ENCODE measurements at regions of chr1 and their contacts with region 1.

Region 1: DNA sequence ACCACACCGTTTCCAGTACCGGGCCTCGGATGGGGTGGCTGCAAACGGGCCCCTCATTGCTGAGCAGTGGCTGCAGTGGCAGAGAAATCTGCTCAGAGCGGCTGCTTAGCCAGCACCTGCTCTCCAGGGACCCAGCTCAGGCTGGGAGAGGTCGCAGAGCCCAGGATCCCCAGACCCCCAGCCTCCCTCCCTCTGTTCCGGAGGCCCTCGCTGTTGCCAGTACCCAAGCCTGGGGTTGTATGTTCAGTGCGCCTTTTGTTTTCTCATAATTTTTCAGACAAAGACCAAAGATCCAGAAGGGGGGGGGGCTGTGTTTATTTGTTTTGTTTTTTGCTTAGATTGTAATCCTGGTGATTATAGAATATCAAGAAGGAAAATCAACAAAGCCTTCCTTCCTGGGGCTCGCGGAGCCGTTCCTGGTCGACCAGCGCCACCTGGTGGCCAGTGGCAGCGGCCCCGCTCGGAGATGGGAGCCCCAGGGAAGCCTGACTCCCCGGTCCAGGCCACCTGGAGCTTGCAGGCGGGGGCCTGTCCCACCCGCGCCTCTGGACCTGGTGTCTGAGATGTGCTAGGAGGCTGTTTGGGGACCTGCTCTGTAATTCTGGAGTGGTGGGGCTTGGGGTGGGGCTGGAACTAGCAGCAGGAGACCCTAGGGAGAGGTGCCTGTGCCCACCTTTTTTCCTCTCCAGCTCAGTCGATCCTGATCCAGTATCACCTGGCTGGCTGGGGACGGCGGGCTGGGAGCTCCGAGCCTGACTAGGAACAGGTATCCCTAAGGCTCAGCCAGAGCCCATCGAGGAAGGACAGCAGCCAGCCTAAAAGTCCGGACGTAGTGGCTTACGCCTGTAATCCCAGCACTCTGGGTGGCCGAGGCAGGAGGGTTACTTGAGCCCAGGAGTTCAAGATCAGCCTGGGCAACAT is 123.9 kb upstream of the VAMP3 start:
- DNase-seq: peak; percentile 94
- H3K4me3 ChIP-seq: no peak overlapping the region; a peak in 1 of 4 replicates
- H3K27ac ChIP-seq: peak overlapping the region in 1 of 2 experiments; percentile 85; a peak in 2 of 4 replicates
- H3K4me1 ChIP-seq: peaks cover 0 to 39% of the 10 kb centered on the region in 2 experiments; a peak in 1 of 4 replicates
- H3K27me3 ChIP-seq: no peaks in the 10 kb centered on the region
- CTCF ChIP-seq: peak; percentile 88
- EP300 ChIP-seq: no peak
- RAD21 ChIP-seq: peak; percentile 95

Region 2: GRCh38 chr1:7042322-7043190 is 604.7 kb before region 1 on chr1:
- CTCF ChIA-PET with region 1: interaction called, 33 read pairs
- POLR2A ChIA-PET with region 1: no interaction called
- DNase-seq: peak; percentile 59
- H3K4me3 ChIP-seq: no peak overlapping the region
- H3K27ac ChIP-seq: no peak overlapping the region
- H3K4me1 ChIP-seq: peaks cover 0 to 27% of the 10 kb centered on the region in 2 experiments; a peak in 2 of 4 replicates
- H3K27me3 ChIP-seq: no peaks in the 10 kb centered on the region
- CTCF ChIP-seq: peak; percentile 70
- EP300 ChIP-seq: no peak
- RAD21 ChIP-seq: peak; percentile 71

Region 3: GRCh38 chr1:7207875-7208646 is 439.2 kb before region 1 on chr1:
- CTCF ChIA-PET with region 1: interaction called, 11 read pairs
- POLR2A ChIA-PET with region 1: no interaction called
- DNase-seq: peak; percentile 73
- H3K4me3 ChIP-seq: no peak overlapping the region; a peak in 1 of 4 replicates
- H3K27ac ChIP-seq: no peak overlapping the region
- H3K4me1 ChIP-seq: peaks cover 0 to 8% of the 10 kb centered on the region in 2 experiments; a peak in 2 of 4 replicates
- H3K27me3 ChIP-seq: no peaks in the 10 kb centered on the region
- CTCF ChIP-seq: peak; percentile 55
- EP300 ChIP-seq: no peak
- RAD21 ChIP-seq: peak; percentile 85

Region 4: DNA sequence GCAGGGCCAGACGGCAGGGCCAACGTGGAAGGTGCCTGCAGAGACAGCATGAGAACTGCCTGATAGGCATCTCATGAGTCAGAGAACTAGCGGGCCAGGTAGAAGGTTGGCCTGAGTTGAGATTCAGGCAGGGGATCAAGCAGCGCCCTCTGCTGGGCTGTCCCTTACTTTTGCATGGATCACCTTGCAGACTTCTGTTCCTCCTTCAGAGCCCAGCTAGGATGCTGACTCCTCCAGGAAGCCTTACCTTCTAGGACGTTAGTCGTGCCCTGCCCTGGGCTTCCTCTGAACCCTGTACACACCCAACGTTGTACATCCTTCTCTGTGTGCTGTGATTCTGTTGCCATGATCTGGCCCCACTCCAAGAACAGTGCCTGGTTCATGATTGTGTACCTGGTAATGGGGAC is 107.5 kb before region 1 on chr1:
- CTCF ChIA-PET with region 1: interaction called, 12 read pairs
- POLR2A ChIA-PET with region 1: no interaction called
- DNase-seq: no peak
- H3K4me3 ChIP-seq: no peak overlapping the region; a peak in 1 of 4 replicates
- H3K27ac ChIP-seq: peak overlapping the region in 1 of 2 experiments; percentile 84; a peak in 2 of 4 replicates
- H3K4me1 ChIP-seq: peaks cover 0 to 55% of the 10 kb centered on the region in 2 experiments; a peak in 2 of 4 replicates
- H3K27me3 ChIP-seq: no peaks in the 10 kb centered on the region
- CTCF ChIP-seq: peak; percentile 50
- EP300 ChIP-seq: no peak
- RAD21 ChIP-seq: peak; percentile 49

Region 5: GRCh38 chr1:7580923-7581753 is 66.1 kb before region 1 on chr1:
- CTCF ChIA-PET with region 1: interaction called, 20 read pairs
- POLR2A ChIA-PET with region 1: interaction called, 4 read pairs
- DNase-seq: no peak
- H3K4me3 ChIP-seq: no peak overlapping the region
- H3K27ac ChIP-seq: peak overlapping the region in 1 of 2 experiments; percentile 99; a peak in 2 of 4 replicates
- H3K4me1 ChIP-seq: peaks cover 0 to 49% of the 10 kb centered on the region in 2 experiments; a peak in 2 of 4 replicates
- H3K27me3 ChIP-seq: no peaks in the 10 kb centered on the region
- CTCF ChIP-seq: no peak
- EP300 ChIP-seq: no peak
- RAD21 ChIP-seq: no peak

Region 6: DNA sequence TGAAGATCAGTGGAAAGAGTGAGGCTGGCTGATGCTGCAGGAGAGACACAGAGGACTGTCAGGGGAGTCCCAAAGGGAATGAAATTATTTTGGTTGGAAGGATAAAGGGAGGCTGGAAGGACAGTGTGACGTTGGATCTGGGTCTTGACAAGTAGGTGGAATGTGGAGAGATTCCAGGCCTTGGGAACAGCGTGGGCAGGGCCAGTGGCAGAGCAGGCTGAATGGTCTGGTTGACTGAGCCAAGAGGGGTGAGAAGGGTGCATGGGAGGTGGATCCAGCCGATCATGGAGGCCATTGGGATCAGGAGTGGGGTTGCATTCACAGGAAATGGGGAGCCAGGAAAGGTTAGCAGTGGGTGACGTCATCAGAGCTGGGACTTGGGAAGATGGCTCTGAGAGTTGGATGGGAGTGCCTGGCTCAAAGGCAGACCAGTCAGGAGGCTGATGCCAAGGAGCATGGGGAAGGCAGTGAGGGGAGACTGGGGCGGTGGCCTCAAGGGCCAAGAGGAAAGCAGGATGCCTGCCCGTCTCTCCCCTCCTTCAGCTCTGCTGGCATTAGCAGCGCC is 22.4 kb before region 1 on chr1:
- CTCF ChIA-PET with region 1: interaction called, 12 read pairs
- POLR2A ChIA-PET with region 1: interaction called, 4 read pairs
- DNase-seq: no peak
- H3K4me3 ChIP-seq: no peak overlapping the region
- H3K27ac ChIP-seq: no peak overlapping the region; a peak in 1 of 4 replicates
- H3K4me1 ChIP-seq: peaks cover 0 to 57% of the 10 kb centered on the region in 2 experiments; a peak in 2 of 4 replicates
- H3K27me3 ChIP-seq: peaks cover 6% of the 10 kb centered on the region; the same call in 1 of the 2 replicates
- CTCF ChIP-seq: no peak
- EP300 ChIP-seq: no peak
- RAD21 ChIP-seq: no peak

Region 7: GRCh38 chr1:7752512-7753417 is 105.5 kb after region 1 on chr1:
- CTCF ChIA-PET with region 1: interaction called, 12 read pairs
- POLR2A ChIA-PET with region 1: no interaction called
- DNase-seq: peak; percentile 62
- H3K4me3 ChIP-seq: no peak overlapping the region; a peak in 3 of 4 replicates
- H3K27ac ChIP-seq: peak overlapping the region in 1 of 2 experiments; percentile 77; a peak in 2 of 4 replicates
- H3K4me1 ChIP-seq: peaks cover 0 to 17% of the 10 kb centered on the region in 2 experiments; a peak in 2 of 4 replicates
- H3K27me3 ChIP-seq: no peaks in the 10 kb centered on the region
- CTCF ChIP-seq: peak; percentile 75
- EP300 ChIP-seq: no peak
- RAD21 ChIP-seq: peak; percentile 91